H1 (cell line): ENCODE measurements at regions of chr17 and their contacts with region 1.

Region 1: GRCh38 chr17:74354123-74354522 is 7.5 kb downstream of the BTBD17 start:
- DNase-seq: peak in 1 of 2 experiments; percentile 92
- H3K4me3 ChIP-seq: no peak overlapping the region; a peak in 2 of 8 replicates
- H3K27ac ChIP-seq: no peak overlapping the region
- H3K4me1 ChIP-seq: peaks cover 0 to 8% (median 6%) of the 10 kb centered on the region in 4 experiments; a peak in 5 of 7 replicates
- H3K27me3 ChIP-seq: peaks cover 16 to 49% (median 33%) of the 10 kb centered on the region in 4 experiments
- CTCF ChIP-seq: peak; percentile 99 to 100 (median 100)
- EP300 ChIP-seq: no peak
- POLR2A ChIP-seq: no peak
- RAD21 ChIP-seq: peak; percentile 66 to 79

Region 2: DNA sequence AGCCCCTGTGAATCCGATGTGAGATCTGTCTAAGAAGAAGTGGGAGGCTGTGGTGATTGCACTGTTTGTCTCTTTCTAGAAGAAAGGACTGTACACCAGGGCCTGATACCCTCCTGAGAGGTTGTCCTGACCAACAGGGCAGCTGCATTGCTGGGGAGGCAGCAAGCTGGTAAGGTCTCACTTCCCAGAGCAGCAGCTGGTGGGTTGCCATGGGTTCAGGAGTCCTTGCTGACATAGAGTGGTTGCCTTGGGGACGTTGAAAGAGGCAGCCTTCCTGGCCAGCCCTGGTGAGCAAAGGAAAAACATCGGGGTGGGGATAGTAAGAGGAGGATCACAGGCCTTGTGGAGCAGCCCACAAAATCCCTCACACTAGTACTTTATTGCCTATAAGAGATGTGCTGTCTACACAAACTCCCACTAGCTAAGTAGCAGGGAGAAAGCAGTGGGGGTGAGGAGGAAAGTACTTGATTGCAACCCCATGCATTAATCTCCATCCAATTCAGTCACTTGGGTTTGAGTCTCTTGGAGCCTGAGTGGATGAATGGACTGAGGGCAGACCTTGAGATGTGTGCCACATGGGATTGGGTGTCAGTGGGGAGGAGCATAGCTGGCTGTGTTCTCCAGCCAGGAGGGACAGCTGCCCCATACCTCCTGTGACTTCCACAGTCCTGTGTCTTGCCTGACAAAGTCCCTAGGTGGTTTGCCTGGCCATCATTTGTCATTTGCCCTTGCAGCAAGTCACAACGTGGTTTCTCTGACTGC is 294.5 kb before region 1 on chr17:
- CTCF ChIA-PET with region 1: no interaction called
- POLR2A ChIA-PET with region 1: no interaction called
- DNase-seq: no peak
- H3K4me3 ChIP-seq: no peak overlapping the region
- H3K27ac ChIP-seq: no peak overlapping the region
- H3K4me1 ChIP-seq: peaks cover 0 to 15% (median 2%) of the 10 kb centered on the region in 4 experiments; a peak in 5 of 7 replicates
- H3K27me3 ChIP-seq: no peaks in the 10 kb centered on the region; a peak in 3 of 7 replicates
- CTCF ChIP-seq: no peak
- EP300 ChIP-seq: no peak
- POLR2A ChIP-seq: no peak
- RAD21 ChIP-seq: no peak

Region 3: DNA sequence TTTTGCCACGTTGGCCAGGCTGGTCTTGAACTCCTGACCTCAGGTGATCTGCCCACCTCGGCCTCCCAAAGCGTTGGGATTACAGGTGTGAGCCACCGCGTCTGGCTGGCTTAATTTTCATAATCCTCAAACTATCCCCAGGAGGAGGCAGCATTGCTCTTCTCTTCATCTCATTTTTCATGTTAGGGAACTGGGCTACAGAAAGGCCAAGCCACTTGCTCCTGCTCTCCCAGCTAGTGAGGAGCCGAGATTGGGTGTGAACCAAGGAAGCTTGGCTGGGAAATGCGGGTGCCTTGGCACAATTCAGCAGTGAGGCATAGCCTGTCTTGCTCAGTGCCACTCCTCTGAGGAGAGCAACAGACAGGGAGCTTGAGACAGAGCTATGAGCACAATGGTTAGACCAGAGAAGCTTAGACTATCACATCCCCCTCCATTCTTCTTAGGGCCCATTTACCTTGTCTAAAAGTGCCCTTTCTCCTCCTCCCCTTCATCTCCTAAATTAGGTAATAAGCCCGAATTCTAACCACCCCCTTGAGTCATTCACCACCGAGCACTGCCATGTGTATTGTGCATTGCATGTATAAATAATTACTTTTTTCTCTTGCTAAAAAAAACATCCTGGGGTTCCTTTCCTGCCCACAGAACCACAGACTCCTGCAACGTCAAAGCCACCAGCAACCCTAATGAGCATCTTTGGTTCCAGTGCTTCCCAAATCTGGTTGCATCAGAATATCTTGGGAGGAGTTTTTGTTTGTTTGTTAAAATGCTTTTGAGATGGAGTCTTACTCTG is 48.1 kb before region 1 on chr17:
- CTCF ChIA-PET with region 1: interaction called, 114 read pairs
- POLR2A ChIA-PET with region 1: interaction called, 3 read pairs
- DNase-seq: no peak
- H3K4me3 ChIP-seq: no peak overlapping the region
- H3K27ac ChIP-seq: no peak overlapping the region
- H3K4me1 ChIP-seq: no peaks in the 10 kb centered on the region
- H3K27me3 ChIP-seq: no peaks in the 10 kb centered on the region
- CTCF ChIP-seq: peak in 2 of 3 experiments; percentile 43 to 57; a peak in 3 of 4 replicates
- EP300 ChIP-seq: no peak
- POLR2A ChIP-seq: no peak
- RAD21 ChIP-seq: peak; percentile 62 to 74

Region 4: GRCh38 chr17:74326506-74326905 is 27.6 kb before region 1 on chr17:
- CTCF ChIA-PET with region 1: interaction called, 55 read pairs
- POLR2A ChIA-PET with region 1: no interaction called
- DNase-seq: no peak
- H3K4me3 ChIP-seq: peak overlapping the region; percentile 45 to 61 (median 50)
- H3K27ac ChIP-seq: no peak overlapping the region
- H3K4me1 ChIP-seq: peaks cover 6 to 14% (median 12%) of the 10 kb centered on the region in 4 experiments; a peak in 6 of 7 replicates
- H3K27me3 ChIP-seq: peaks cover 3 to 35% (median 27%) of the 10 kb centered on the region in 4 experiments
- CTCF ChIP-seq: no peak
- EP300 ChIP-seq: no peak
- POLR2A ChIP-seq: no peak
- RAD21 ChIP-seq: no peak

Region 5: GRCh38 chr17:74340470-74341023 is 13.6 kb before region 1 on chr17:
- CTCF ChIA-PET with region 1: interaction called, 55 read pairs
- POLR2A ChIA-PET with region 1: no interaction called
- DNase-seq: no peak
- H3K4me3 ChIP-seq: no peak overlapping the region
- H3K27ac ChIP-seq: no peak overlapping the region
- H3K4me1 ChIP-seq: peaks cover 0 to 16% (median 9%) of the 10 kb centered on the region in 4 experiments; a peak in 5 of 7 replicates
- H3K27me3 ChIP-seq: no peaks in the 10 kb centered on the region; a peak in 1 of 7 replicates
- CTCF ChIP-seq: no peak
- EP300 ChIP-seq: no peak
- POLR2A ChIP-seq: no peak
- RAD21 ChIP-seq: no peak